ENCODE measurements at regions of chrX and their contacts with region 1.

Region 1: GRCh38 chrX:82813671-82814078 is 694.4 kb upstream of the POU3F4 start:
- DNase-seq: peak; percentile 41
- H3K4me3 Mint-ChIP-seq: no peak overlapping the region
- H3K27ac Mint-ChIP-seq: no peak overlapping the region
- H3K4me1 Mint-ChIP-seq: peaks cover 10% of the 10 kb centered on the region
- H3K27me3 Mint-ChIP-seq: no peaks in the 10 kb centered on the region
- CTCF ChIP-seq: no peak

Region 2: DNA sequence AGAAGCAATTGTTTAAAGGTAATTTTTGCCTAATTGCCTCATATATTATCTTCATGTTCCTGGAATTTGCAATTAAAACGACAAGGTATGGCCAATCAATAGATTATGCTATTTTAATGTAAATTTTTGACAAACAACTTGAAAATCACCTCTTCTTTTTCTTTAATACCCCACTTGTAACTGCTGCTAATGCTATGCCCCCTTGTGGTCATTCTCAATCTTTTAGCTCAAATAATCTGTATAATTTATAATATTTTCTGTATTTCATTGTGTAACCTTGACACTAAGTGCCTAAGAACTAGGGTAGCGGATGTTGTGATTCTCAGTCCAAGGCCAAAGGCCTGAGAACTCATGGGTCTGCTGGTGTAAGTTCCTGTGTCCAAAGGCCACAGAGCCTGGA is 137.3 kb before region 1 on chrX:
- CTCF ChIA-PET with region 1: no interaction called
- intact Hi-C with region 1: loop called (anchors 10 kb)
- DNase-seq: no peak
- H3K4me3 Mint-ChIP-seq: no peak overlapping the region
- H3K27ac Mint-ChIP-seq: no peak overlapping the region
- H3K4me1 Mint-ChIP-seq: no peaks in the 10 kb centered on the region
- H3K27me3 Mint-ChIP-seq: no peaks in the 10 kb centered on the region
- CTCF ChIP-seq: no peak

Region 3: DNA sequence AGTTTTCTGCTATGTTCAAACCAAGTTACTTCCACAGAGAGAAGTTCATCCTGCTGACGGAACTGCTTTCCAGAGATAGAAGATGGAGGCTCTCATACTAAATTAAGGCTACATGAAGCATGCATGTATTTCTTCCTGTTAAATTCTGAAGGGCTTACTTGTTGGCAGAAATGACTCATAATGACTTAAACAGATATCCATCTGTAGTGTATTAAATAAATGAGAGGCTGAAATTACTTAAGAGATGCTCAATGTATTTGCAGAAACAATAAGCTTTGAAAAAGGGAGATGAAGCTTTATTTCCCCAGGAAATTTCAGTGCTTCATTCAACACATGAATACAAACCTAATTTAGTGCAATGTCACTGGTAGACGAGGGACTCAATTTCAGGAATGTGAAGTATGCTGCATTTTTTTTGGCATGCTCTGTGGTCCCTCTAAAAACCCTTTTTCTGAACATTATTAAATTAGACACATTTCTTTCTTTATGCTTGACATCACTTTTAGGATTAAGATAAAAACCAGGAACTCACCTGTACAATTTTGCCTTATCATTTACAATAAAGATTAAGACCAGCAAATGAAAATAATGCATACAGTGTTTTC is 64.7 kb before region 1 on chrX:
- CTCF ChIA-PET with region 1: interaction called, 4 read pairs
- intact Hi-C with region 1: loop called (anchors 5 kb)
- DNase-seq: no peak
- H3K4me3 Mint-ChIP-seq: no peak overlapping the region
- H3K27ac Mint-ChIP-seq: peak overlapping the region; percentile 42
- H3K4me1 Mint-ChIP-seq: peaks cover 8% of the 10 kb centered on the region
- H3K27me3 Mint-ChIP-seq: no peaks in the 10 kb centered on the region
- CTCF ChIP-seq: no peak

Region 4: GRCh38 chrX:82765811-82766210 is 47.9 kb before region 1 on chrX:
- CTCF ChIA-PET with region 1: no interaction called
- intact Hi-C with region 1: loop called (anchors 5 kb)
- DNase-seq: no peak
- H3K4me3 Mint-ChIP-seq: no peak overlapping the region
- H3K27ac Mint-ChIP-seq: no peak overlapping the region
- H3K4me1 Mint-ChIP-seq: peaks cover 33% of the 10 kb centered on the region
- H3K27me3 Mint-ChIP-seq: no peaks in the 10 kb centered on the region
- CTCF ChIP-seq: no peak

Region 5: GRCh38 chrX:82842286-82842685 is 28.6 kb after region 1 on chrX:
- CTCF ChIA-PET with region 1: no interaction called
- intact Hi-C with region 1: no loop called
- DNase-seq: no peak
- H3K4me3 Mint-ChIP-seq: no peak overlapping the region
- H3K27ac Mint-ChIP-seq: no peak overlapping the region
- H3K4me1 Mint-ChIP-seq: no peaks in the 10 kb centered on the region
- H3K27me3 Mint-ChIP-seq: no peaks in the 10 kb centered on the region
- CTCF ChIP-seq: no peak

Region 6: GRCh38 chrX:83906921-83907320 is 1093.2 kb after region 1 on chrX:
- CTCF ChIA-PET with region 1: no interaction called
- intact Hi-C with region 1: no loop called
- DNase-seq: no peak
- H3K4me3 Mint-ChIP-seq: no peak overlapping the region
- H3K27ac Mint-ChIP-seq: no peak overlapping the region
- H3K4me1 Mint-ChIP-seq: no peaks in the 10 kb centered on the region
- H3K27me3 Mint-ChIP-seq: no peaks in the 10 kb centered on the region
- CTCF ChIP-seq: no peak

Measured in Calu3 (cell line).